ENCODE measurements at regions of chr10 and their contacts with region 1.

Region 1: DNA sequence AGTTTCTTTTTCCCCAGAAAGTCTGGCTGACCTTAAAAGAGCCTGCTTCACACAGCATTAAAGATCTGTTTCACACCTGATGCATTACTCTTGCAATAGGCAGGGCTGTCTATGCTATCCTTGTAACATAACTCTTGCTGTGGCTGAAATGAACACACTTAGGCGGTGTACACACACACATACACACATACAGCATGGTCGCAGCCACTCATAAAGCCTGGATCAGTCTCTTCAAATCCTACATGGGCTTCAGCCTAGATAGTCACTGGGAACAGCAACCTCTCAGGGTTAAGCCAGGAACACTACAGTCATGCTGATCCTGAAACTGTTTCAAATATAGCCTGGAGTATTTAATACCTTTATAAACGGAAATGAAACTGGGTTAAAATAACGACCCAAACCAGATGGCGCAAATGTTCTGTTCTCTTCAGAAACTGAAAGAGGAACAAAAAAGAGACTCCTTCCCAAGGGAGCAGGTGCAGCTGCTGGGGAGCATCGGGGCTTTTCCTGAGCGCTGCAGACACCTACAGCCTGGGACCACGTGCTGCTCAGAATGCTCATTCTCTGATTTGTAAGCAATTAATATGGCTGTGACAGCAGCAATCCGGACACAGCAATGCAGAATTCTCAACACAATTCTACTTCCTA is 61.0 kb upstream of the SFMBT2 start:
- DNase-seq: peak in 2 of 9 experiments; percentile 28 to 60
- ATAC-seq: peak; percentile 57
- H3K4me3 ChIP-seq: peak overlapping the region; percentile 33 to 36
- H3K4me3 Mint-ChIP-seq: peak overlapping the region; percentile 84
- H3K27ac ChIP-seq: peak overlapping the region in 1 of 2 experiments; percentile 58
- H3K27ac Mint-ChIP-seq: peak overlapping the region; percentile 88
- H3K4me1 ChIP-seq: peaks cover 12% of the 10 kb centered on the region
- H3K4me1 Mint-ChIP-seq: peaks cover 33% of the 10 kb centered on the region
- H3K27me3 ChIP-seq: no peaks in the 10 kb centered on the region
- H3K27me3 Mint-ChIP-seq: no peaks in the 10 kb centered on the region
- CTCF ChIP-seq: no peak

Region 2: DNA sequence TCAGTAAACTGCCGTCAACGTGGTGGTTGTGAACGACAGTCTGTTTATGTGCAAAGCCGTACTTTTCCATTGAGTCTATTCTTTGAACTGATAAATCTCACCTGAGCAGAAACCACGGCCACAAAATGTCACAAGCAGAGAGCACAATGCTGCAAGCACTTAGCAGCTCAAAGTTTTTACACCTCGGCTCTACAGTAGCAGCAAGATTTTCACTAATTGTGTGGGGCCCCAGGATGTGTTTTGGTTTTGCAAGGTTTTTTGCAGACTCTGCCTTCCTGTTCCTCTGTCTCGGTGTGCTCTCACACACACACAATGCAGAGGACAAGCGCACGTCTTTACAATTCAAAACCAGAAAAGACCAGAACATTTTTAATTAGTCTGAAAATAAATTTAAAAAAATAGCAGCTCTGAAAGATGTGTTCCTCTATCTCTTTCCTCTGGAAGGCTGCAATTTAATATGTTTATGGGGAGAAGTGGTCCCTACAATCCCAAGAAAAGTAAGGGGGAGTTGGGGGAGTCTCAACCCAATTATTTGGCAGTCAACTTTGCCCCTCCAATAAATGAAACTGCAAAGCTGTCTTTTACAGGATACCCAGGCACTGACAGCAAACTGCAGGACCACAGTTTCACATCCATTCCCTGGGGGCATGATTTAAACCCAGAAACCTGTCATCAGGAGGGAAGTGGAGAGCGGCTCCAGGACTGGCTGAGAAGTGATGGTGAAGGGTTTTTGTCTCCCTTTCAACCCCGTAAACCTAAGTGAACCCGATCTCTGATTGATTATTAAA is 12.8 kb after region 1 on chr10:
- CTCF ChIA-PET with region 1: interaction called, 4 read pairs
- POLR2A ChIA-PET with region 1: interaction called, 11 read pairs
- intact Hi-C with region 1: no loop called
- DNase-seq: peak; percentile 39 to 92 (median 66)
- ATAC-seq: peak; percentile 79
- H3K4me3 ChIP-seq: peak overlapping the region; percentile 16 to 40
- H3K4me3 Mint-ChIP-seq: peak overlapping the region; percentile 69
- H3K27ac ChIP-seq: peak overlapping the region; percentile 67 to 83
- H3K27ac Mint-ChIP-seq: peak overlapping the region; percentile 94
- H3K4me1 ChIP-seq: peaks cover 80% of the 10 kb centered on the region
- H3K4me1 Mint-ChIP-seq: peaks cover 89% of the 10 kb centered on the region
- H3K27me3 ChIP-seq: no peaks in the 10 kb centered on the region
- H3K27me3 Mint-ChIP-seq: no peaks in the 10 kb centered on the region
- CTCF ChIP-seq: no peak

Region 3: DNA sequence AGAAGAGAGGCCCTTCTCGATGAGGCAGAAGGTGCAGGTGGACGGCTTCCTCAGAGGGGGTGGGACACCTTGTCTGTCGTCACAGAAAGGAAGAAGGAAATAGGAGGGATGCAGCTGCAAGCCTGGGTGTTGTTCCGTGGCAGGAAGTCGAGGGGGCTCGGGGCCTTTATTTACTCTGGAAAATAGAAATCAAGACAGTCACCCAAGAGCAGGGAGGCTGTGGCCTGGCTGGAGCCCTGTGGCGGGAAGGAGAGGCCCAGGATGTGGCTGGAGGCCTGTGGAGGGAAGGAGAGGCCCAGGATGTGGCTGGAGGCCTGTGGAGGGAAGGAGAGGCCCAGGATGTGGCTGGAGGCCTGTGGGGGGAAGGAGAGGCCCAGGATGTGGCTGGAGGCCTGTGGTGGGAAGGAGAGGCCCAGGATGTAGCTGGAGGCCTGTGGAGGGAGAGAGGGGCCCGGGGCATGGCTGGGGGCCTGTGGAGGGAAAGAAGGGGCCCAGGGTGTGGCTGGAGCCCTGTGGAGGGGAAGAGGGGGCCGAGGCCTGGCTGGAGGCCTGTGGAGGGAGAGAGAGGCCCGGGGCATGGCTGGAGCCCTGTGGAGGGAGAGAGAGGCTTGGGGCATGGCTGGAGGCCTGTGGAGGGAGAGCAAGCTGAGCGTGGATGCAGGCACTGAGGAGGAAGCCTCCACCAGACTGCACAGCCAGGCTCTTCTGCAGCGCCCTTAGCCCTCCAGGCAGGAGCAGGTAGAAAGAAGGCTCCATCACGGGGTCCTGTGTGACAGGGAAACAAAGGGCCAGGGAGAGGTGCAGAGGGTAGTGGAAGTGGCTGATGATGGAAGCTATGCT is 36.3 kb after region 1 on chr10:
- CTCF ChIA-PET with region 1: interaction called, 3 read pairs
- POLR2A ChIA-PET with region 1: no interaction called
- intact Hi-C with region 1: loop called (anchors 5 kb)
- DNase-seq: peak in 5 of 9 experiments; percentile 23 to 75 (median 55)
- ATAC-seq: peak; percentile 52
- H3K4me3 ChIP-seq: no peak overlapping the region
- H3K4me3 Mint-ChIP-seq: peak overlapping the region; percentile 42
- H3K27ac ChIP-seq: peak overlapping the region; percentile 29 to 73
- H3K27ac Mint-ChIP-seq: peak overlapping the region; percentile 86
- H3K4me1 ChIP-seq: peaks cover 26% of the 10 kb centered on the region
- H3K4me1 Mint-ChIP-seq: peaks cover 58% of the 10 kb centered on the region
- H3K27me3 ChIP-seq: no peaks in the 10 kb centered on the region
- H3K27me3 Mint-ChIP-seq: no peaks in the 10 kb centered on the region
- CTCF ChIP-seq: no peak